Right ventricle myocardium inferior (tissue), 1 donor: ENCODE measurements at regions of chr6 and their contacts with region 1.

Region 1: DNA sequence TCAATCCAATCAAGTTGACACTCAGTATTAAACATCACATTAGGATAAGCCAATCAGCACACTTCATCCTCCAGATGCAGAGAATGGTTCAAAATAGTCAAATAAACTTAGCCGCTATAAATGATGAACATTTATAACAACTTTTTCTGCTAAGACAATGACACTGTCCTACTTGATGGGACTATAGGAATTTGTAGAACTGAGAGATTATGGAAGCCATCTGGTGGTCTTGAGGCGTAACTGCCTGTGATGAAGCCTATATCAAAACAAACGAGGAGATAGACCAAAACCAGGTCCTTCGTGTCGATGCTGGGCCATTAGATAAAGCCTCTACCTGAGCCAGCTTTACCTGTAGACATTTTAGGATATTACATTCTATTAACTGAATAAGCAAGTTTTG is 631.1 kb downstream of the COL12A1 start:
- DNase-seq: no peak
- ATAC-seq: no peak

Region 2: DNA sequence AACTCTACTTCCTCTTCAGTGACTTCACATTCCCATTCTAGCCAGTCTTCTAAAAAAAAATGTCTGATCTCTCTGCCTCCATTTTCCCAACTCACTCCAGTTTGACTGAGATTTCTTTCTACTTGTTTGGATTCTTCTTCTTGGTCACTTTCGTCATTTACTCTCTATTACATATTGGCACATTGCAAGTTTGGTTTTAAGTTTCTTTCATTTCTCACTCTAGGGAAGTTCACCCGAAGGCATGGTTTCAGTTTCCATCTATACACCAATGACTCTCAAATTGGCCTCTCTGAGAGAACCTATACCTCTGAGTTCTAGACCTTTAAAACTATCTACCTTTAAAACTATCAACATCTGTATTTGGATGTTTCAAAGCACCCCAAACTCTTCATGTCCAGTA is 827.5 kb before region 1 on chr6:
- intact Hi-C with region 1: loop called (anchors 10 kb)
- DNase-seq: no peak
- ATAC-seq: no peak

Region 3: DNA sequence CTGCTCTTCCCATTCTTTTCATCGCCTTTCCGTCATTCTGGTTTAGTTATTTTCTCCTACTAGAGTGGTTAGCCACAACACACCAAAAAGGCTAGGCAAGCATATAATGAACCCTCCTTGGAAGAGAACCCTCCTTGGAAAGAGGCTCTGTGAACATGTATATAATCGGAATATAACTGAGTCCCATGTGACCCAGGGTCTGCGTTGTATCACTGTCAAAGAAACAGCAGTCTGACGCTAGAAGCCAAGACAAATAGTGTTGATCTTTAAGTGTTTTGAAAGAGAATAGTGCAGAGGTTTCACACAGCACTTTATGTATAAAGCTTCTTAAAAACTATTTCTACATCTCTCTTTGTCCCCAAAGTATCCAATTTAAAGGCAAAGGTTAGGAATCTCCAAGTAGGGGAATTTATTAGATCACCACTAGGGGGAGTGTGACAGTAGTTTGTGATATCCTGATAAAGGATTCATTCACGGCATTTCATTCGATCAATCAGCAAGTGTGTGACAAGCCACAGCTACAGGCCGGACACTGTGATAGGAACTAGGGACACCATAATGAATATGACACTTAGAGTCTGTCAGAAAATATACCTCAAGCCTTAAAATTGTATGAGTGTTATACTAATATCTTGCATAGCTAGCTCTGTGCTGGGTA is 483.5 kb before region 1 on chr6:
- intact Hi-C with region 1: loop called (anchors 2 kb)
- DNase-seq: no peak
- ATAC-seq: peak; percentile 46

Region 4: GRCh38 chr6:74410630-74411029 is 164.2 kb before region 1 on chr6:
- intact Hi-C with region 1: loop called (anchors 10 kb)
- DNase-seq: no peak
- ATAC-seq: no peak